K562 (cell line): ENCODE measurements at regions of chr6 and their contacts with region 1.

Region 1: DNA sequence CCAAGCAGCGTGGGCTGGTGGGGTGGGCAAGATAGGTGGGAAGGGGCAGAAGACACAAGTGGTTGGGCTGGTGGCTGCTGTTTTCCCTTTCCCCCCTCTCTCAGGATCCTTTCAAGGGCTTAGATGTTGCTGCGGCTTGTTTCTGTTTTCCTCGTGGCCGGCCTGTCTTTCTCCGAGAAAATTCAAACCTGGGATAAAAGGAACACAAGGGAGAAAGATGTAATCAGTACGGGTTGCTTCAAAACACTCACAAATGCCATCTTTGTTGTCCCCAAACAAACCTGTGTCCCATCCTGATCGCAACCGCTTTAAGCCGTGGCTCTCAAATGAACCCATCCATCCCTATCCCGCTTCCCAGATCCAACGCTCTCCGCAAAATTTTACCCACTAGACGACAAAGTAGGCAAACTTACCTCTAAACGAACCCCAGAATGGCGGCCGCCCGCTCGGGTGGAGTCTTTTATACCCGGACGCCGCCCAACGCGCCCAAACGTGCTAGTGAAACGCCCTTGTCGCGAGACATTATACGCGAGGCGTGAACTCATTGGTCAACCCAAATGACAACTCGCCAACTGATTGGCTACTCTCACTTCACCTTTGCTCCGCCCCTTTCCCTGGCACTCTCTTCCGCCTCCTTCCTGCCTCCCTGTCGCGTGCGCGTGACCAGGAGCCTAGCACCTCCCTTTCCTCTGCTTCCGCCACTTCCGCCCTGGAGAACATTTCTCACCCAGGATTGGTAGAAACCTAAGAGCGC is at the start of gene PPP1R10:
- DNase-seq: peak; percentile 96 to 100 (median 98)
- ATAC-seq: peak; percentile 77
- H3K4me3 ChIP-seq: peak within 1 kb of the TSS; percentile 68
- H3K27ac ChIP-seq: peak within 1 kb of the TSS; percentile 99
- H3K4me1 ChIP-seq: peaks cover 4 to 26% of the 10 kb centered on the region in 2 experiments; a peak in 4 of 5 replicates
- H3K27me3 ChIP-seq: no peaks in the 10 kb centered on the region
- CTCF ChIP-seq: peak in 1 of 3 experiments; percentile 7; a peak in 1 of 6 replicates
- EP300 ChIP-seq: peak; percentile 39; the same call in 1 of the 2 replicates
- POLR2A ChIP-seq: peak; percentile 100
- RAD21 ChIP-seq: no peak
- polyA plus RNA-seq, gene PPP1R10: 14.1 to 21.9 TPM

Region 2: DNA sequence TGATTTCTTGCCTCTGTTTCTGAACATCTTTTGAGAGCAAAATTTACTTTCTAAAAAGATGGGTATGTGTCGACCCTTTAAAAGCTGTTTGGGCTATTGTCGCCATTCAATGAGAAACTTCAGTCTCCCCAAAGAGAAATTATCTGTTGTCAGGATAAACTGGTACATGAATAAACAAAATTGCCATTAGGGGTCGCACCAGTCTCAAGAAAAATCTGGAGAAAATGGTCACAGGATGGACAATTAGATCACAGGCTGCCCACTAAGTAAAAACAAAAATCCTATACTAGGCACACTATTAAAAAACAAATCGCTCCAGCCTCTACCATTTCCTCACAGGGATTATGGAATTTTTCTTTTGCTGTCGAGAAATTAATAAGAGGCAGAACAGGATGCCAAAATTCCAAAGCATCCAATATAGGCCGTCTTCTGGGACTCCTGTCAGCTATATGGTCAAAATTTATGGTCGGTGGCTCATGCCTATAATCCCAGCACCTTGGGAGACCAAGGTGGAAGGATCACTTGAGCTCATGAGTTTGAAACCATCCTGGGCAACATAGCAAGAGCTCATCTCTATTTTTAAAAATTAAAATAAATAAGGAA is 133.2 kb before region 1 on chr6:
- CTCF ChIA-PET with region 1: no interaction called
- POLR2A ChIA-PET with region 1: interaction called, 10 read pairs
- in situ Hi-C with region 1: no loop called
- intact Hi-C with region 1: no loop called
- DNase-seq: peak in 3 of 4 experiments; percentile 29 to 83 (median 62)
- ATAC-seq: peak; percentile 56; the same call in 2 of the 3 replicates
- H3K4me3 ChIP-seq: no peak overlapping the region
- H3K27ac ChIP-seq: no peak overlapping the region
- H3K4me1 ChIP-seq: peaks cover 2 to 11% of the 10 kb centered on the region in 2 experiments; a peak in 3 of 5 replicates
- H3K27me3 ChIP-seq: peaks cover 19 to 26% of the 10 kb centered on the region in 2 experiments
- CTCF ChIP-seq: peak; percentile 75 to 90 (median 77)
- EP300 ChIP-seq: no peak
- POLR2A ChIP-seq: no peak
- RAD21 ChIP-seq: peak; percentile 88 to 89

Region 3: DNA sequence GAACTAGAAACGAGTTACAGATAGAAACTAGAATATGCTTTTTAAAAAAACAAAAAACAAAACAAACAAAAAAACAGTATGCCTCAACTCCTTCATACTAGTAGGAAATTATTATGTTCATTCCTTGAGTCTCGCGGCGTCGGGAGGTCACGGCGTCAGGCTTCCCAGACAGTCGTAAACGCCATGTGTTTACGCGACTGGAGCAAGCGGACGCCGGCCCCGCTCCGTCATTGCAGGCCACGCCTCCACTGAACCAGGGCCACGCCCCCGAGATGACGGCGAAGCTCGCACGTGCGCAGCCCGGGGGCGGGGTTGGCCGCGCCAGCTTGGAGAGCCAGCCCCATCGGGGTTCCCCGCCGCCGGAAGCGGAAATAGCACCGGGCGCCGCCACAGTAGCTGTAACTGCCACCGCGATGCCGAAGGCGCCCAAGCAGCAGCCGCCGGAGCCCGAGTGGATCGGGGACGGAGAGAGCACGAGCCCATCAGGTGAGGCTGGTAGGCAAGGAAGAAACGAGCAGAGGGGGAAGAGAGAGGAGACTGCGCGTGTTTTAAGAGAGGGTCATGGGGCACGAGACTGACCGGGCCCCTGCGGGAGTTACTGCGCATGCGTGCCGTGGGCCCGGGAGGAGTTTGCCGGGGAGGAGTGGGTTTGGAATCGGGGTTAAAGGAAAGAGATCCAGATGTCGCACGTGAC is 45.8 kb before region 1 on chr6 and contains the start of gene ABCF1:
- CTCF ChIA-PET with region 1: no interaction called
- POLR2A ChIA-PET with region 1: interaction called, 16 read pairs
- in situ Hi-C with region 1: no loop called
- intact Hi-C with region 1: no loop called
- DNase-seq: peak; percentile 99
- ATAC-seq: peak; percentile 95
- H3K4me3 ChIP-seq: peak within 1 kb of the TSS; percentile 67
- H3K27ac ChIP-seq: peak within 1 kb of the TSS; percentile 92
- H3K4me1 ChIP-seq: peaks cover 24 to 35% of the 10 kb centered on the region in 2 experiments; a peak in 4 of 5 replicates
- H3K27me3 ChIP-seq: no peaks in the 10 kb centered on the region
- CTCF ChIP-seq: 0 out of 6 replicates have a peak, but pooled peaks of 1 of the 3 experiments have one; percentile 13
- EP300 ChIP-seq: peak; percentile 41; the same call in 1 of the 2 replicates
- POLR2A ChIP-seq: peak; percentile 99
- RAD21 ChIP-seq: no peak
- polyA plus RNA-seq, gene ABCF1: 41.6 to 43.5 TPM

Region 4: DNA sequence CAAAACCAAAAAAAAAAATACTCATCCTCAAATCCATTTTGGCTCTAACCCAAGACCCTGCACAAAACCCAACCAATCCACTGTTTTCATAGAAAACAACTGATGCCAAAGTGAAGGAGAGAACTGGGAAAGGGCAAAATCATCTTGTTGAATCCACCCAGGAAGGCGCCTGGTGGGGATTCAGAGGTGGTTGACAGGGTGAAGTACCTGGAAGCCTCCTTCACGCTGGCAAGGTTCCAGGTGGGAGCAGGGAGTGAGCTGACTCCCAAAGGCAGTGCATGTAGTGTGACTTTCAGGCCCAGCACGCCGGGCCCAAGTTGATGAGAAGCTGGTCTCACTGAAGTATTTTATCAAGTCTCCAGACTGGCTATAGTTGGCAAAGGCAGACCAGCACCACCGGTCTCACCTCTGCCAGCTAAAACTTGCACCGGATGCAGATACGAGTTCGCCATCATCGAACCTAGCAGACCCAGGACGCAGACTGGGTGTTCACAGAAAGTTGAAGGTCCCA is 16.5 kb before region 1 on chr6:
- CTCF ChIA-PET with region 1: no interaction called
- POLR2A ChIA-PET with region 1: interaction called, 310 read pairs
- in situ Hi-C with region 1: no loop called
- intact Hi-C with region 1: no loop called
- DNase-seq: peak in 2 of 4 experiments; percentile 29 to 30
- ATAC-seq: no peak
- H3K4me3 ChIP-seq: no peak overlapping the region
- H3K27ac ChIP-seq: no peak overlapping the region
- H3K4me1 ChIP-seq: peaks cover 4 to 11% of the 10 kb centered on the region in 2 experiments; a peak in 4 of 5 replicates
- H3K27me3 ChIP-seq: no peaks in the 10 kb centered on the region
- CTCF ChIP-seq: no peak
- EP300 ChIP-seq: no peak
- POLR2A ChIP-seq: peak; percentile 63
- RAD21 ChIP-seq: no peak

Region 5: DNA sequence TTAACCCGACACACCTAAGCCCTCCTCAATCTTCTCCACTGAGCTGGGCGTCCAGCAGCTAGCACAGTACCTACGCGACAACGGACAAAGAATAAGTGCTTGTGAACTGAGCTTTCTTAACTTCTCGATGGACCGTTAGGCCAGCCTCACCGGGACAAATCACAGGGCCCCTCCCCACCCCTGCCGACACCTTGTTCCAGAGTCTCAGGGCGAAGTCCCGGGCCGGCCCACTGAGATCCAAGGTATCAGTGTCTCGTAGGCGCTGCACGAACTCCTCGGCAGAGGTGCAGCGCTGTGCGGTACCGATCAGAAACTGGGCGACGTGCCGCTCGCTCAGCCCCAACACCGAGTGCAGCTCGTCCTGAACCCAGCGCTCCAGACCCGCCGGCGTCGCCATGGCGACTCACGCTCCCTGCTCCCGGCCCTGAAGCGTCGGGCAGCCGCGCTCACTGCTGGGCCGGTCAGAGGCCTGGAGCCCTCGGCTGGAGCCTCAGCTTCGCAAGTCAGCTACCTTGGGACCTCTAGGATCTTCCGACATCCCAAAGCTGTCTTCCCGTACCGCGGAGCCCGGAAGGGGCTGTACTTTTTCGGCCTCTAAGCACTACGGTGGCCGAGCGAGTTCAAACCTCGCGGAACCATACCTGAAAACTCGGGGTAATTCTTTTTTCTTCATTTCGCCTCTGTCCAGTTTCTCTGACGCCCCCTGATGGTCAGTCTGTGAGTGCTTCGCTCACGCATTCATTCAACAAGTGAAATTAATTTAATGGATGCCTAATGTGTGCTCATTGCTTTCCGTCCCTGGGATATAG is 55.7 kb after region 1 on chr6 and contains the start of gene DHX16:
- CTCF ChIA-PET with region 1: no interaction called
- POLR2A ChIA-PET with region 1: interaction called, 21 read pairs
- in situ Hi-C with region 1: no loop called
- intact Hi-C with region 1: loop called (anchors 2 kb)
- DNase-seq: peak; percentile 85 to 99 (median 90)
- ATAC-seq: peak; percentile 89
- H3K4me3 ChIP-seq: peak within 1 kb of the TSS; percentile 83
- H3K27ac ChIP-seq: peak within 1 kb of the TSS; percentile 60
- H3K4me1 ChIP-seq: peaks cover 7 to 27% of the 10 kb centered on the region in 2 experiments
- H3K27me3 ChIP-seq: no peaks in the 10 kb centered on the region
- CTCF ChIP-seq: peak; percentile 85 to 98 (median 97)
- EP300 ChIP-seq: peak; percentile 58; the same call in 1 of the 2 replicates
- POLR2A ChIP-seq: peak; percentile 81
- RAD21 ChIP-seq: peak; percentile 76 to 77
- polyA plus RNA-seq, gene DHX16: 14.6 to 15.3 TPM

Region 6: DNA sequence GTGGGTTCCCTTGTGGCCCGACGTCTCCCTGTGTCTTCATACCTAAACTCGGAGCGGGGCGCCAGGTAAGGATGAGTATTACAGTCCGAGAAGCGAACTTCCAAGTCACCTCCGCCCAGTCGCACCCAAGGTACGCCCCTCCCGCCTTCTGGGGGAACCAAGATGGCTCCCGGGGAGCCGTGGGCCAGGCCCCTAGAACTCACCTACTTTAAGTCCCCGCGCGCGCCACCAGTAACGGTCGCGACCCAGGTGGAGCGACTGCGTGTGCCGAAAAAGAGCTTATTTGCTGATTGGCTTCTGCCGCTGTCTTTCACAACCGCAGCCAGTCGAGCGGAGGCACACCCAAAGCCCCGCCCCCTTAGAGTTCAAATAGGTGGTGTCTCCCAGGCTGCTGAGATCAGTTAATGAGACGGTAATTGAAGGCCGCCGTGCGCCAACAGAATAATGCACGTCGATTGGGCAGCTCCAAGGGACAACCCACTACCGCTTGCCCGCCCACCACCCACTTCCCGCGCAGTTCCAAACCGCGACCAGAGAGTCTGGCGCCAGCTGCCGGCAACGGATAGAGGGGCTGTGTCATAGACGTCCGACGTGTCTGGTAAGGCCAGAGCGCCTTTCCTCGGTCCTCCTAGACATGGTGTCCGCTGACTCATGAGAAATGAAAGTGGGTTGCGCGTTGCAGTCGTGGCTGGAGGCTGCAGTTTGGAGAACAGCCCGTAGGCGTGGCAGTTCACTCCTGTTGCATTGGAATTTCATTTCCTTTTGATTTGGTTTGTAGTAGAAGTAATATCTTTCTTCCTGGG is 100.3 kb after region 1 on chr6 and contains the start of gene MDC1:
- CTCF ChIA-PET with region 1: no interaction called
- POLR2A ChIA-PET with region 1: interaction called, 30 read pairs
- in situ Hi-C with region 1: no loop called
- intact Hi-C with region 1: loop called (anchors 1 kb)
- DNase-seq: peak; percentile 96 to 100 (median 98)
- ATAC-seq: peak; percentile 78
- H3K4me3 ChIP-seq: peak within 1 kb of the TSS; percentile 56
- H3K27ac ChIP-seq: peak within 1 kb of the TSS; percentile 98
- H3K4me1 ChIP-seq: peaks cover 7 to 15% of the 10 kb centered on the region in 2 experiments
- H3K27me3 ChIP-seq: no peaks in the 10 kb centered on the region
- CTCF ChIP-seq: peak in 2 of 3 experiments; percentile 38 to 52; a peak in 3 of 6 replicates
- EP300 ChIP-seq: peak; percentile 84
- POLR2A ChIP-seq: peak; percentile 91
- RAD21 ChIP-seq: peak; percentile 24 to 32; a peak in 3 of 4 replicates
- polyA plus RNA-seq, gene MDC1: 8.2 to 8.8 TPM

Region 7: DNA sequence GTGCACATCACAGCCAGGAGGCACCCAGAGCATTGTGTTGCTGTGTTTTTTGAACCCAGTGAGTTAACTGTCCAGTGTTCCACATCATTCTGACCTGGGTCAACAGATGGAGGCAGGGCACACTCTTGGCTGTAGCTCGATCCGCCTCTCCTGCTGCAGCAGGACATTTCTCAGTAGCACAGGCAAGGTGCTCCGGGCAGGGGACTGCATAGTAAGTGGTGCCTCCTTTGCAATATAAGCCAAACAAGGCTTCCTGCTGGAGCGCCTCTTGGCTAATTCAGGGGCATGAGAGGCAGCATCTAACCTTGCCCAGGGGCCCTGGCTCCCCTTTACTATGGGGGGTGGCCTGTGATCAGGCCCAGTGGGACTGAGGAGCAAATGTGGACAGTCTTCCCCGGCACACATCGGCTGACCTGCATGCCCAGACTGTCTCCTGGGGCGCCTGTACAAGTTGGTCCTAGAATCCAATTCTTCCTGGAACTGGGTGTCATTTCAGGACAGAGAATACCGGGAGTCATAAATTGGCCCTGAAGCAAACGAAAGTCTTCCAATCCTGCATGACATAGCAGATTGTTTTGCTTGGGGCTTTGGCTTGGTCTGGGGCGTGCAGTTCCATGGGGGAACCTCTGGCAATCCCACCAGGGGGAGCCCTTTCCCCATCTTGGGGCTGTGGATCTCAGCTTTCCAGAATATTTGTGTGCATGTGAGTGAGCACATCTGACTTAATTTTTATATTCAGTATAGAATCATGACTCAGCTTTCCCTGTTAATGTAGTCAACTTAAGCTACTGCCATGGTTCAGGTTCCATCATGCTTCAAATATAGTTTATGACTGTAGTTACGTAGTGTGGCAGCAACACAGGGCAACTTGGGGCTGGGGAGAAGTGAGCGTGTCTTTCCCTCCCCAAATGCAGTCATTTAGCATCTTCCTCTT is 211.3 kb after region 1 on chr6:
- CTCF ChIA-PET with region 1: no interaction called
- POLR2A ChIA-PET with region 1: no interaction called
- in situ Hi-C with region 1: no loop called
- intact Hi-C with region 1: loop called (anchors 5 kb)
- DNase-seq: peak; percentile 92 to 95 (median 94)
- ATAC-seq: peak; percentile 97
- H3K4me3 ChIP-seq: no peak overlapping the region
- H3K27ac ChIP-seq: peak overlapping the region; percentile 76
- H3K4me1 ChIP-seq: peaks cover 11 to 23% of the 10 kb centered on the region in 2 experiments
- H3K27me3 ChIP-seq: no peaks in the 10 kb centered on the region
- CTCF ChIP-seq: peak; percentile 97 to 99 (median 99)
- EP300 ChIP-seq: peak; percentile 69
- POLR2A ChIP-seq: no peak
- RAD21 ChIP-seq: peak; percentile 100